Activated T-helper 1 cell treated with anti-CD3 and anti-CD28 coated beads, Interleukin-12 subunit alpha, Interleukin-12 subunit beta, Interleukin-2, Interleukin-4 antibody, amounts not matched to agents 30 ng/mL and 10 ng/mL and 1 ng/mL, durations not matched to agents 14 hours and 24 hours and 36 hours (primary cell): ENCODE measurements at regions of chr9 and their contacts with region 1.

Region 1: GRCh38 chr9:22147813-22148524 is 138.9 kb upstream of the CDKN2B start:
- DNase-seq: peak; percentile 15
- H3K4me3 Mint-ChIP-seq: no peak overlapping the region
- H3K27ac Mint-ChIP-seq: peak overlapping the region; percentile 75
- H3K4me1 Mint-ChIP-seq: peaks cover 32% of the 10 kb centered on the region
- H3K27me3 Mint-ChIP-seq: peaks cover 22% of the 10 kb centered on the region

Region 2: DNA sequence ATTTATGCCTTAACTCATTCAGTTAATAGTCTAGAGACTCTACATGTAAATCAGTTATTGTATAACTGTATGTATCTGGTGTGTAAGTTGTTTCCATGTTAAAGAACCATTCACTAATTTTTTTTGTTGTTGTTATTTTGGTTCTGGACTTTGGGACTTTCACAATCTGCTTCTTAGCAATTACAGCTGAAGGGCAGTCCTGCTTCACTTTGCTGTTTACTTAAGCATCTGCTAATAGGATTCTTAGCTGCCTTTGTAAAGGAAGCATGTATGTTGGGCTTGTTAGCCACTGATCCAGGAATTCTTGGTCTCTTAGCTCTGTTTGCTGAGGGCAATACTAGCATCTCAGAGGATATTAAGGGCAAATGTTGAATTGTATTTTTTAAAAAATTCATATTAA is 1366.9 kb before region 1 on chr9:
- intact Hi-C with region 1: no loop called
- DNase-seq: no peak
- H3K4me3 Mint-ChIP-seq: no peak overlapping the region
- H3K27ac Mint-ChIP-seq: no peak overlapping the region
- H3K4me1 Mint-ChIP-seq: no peaks in the 10 kb centered on the region
- H3K27me3 Mint-ChIP-seq: no peaks in the 10 kb centered on the region

Region 3: DNA sequence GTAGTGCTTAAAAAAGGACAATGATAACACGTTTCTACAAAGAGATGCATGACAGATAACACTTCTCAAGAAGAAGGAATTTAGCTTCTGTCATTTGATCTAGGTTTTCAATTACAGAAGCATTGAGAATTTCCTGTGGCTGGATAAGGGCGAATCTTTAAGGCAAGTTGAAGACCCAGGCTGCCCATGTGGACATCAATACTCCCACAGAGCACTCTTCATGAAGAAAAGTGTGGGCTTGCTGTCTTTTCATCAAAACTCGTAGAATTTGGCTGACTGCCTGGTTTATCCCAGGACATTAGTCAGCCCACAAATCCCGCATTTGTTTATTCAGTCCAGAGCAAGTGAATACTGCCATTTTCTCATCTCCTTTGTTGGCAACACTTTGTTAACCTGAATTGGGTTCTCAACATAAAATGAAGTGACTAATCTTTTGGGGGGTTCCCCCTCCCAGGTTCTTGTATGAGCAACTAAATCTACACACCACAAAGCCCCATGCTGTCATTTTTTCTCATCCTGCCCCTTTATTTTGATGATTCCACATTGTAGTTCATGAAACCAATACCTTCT is 95.5 kb before region 1 on chr9:
- intact Hi-C with region 1: loop called (anchors 1 kb)
- DNase-seq: peak; percentile 40
- H3K4me3 Mint-ChIP-seq: no peak overlapping the region
- H3K27ac Mint-ChIP-seq: peak overlapping the region; percentile 5
- H3K4me1 Mint-ChIP-seq: peaks cover 32% of the 10 kb centered on the region
- H3K27me3 Mint-ChIP-seq: peaks cover 26% of the 10 kb centered on the region

Region 4: DNA sequence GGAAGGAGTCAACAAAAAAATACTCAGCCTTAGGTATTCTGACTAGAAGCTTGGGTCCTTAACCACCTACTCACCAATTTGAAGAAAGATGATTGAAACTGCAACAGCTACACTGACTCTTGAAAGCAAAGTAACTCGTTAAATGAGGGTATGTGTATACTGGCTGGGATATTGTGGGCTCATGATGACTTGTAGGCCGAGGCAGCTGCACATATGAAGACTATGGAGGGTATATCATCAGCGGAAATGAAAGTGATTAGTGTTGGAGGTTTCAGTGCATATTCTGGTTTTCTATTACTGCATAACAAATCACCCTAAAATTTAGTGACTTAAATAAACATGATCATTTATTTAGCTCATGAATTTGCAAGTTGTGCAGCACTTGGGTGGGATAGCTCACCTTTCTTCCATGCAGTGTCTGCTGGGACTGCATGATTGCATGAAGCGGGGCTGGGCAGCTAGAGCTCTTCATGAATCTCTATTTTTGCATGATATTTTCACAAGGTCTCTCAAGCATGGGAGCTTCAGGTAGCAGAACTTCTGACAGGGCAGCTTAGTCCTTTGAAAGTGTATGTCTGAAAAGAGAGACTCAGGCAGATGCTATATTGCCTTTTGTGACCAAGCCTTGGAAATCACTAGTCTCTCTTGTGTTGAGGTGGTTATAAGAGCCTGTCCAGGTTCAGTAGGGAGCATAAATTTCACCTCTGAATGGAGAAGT is 42.8 kb before region 1 on chr9:
- intact Hi-C with region 1: loop called (anchors 2 kb)
- DNase-seq: no peak
- H3K4me3 Mint-ChIP-seq: no peak overlapping the region
- H3K27ac Mint-ChIP-seq: no peak overlapping the region
- H3K4me1 Mint-ChIP-seq: peaks cover 47% of the 10 kb centered on the region
- H3K27me3 Mint-ChIP-seq: peaks cover 27% of the 10 kb centered on the region

Region 5: GRCh38 chr9:22169727-22170503 is 21.9 kb after region 1 on chr9:
- intact Hi-C with region 1: loop called (anchors 2 kb)
- DNase-seq: no peak
- H3K4me3 Mint-ChIP-seq: no peak overlapping the region
- H3K27ac Mint-ChIP-seq: no peak overlapping the region
- H3K4me1 Mint-ChIP-seq: peaks cover 9% of the 10 kb centered on the region
- H3K27me3 Mint-ChIP-seq: peaks cover 23% of the 10 kb centered on the region

Region 6: DNA sequence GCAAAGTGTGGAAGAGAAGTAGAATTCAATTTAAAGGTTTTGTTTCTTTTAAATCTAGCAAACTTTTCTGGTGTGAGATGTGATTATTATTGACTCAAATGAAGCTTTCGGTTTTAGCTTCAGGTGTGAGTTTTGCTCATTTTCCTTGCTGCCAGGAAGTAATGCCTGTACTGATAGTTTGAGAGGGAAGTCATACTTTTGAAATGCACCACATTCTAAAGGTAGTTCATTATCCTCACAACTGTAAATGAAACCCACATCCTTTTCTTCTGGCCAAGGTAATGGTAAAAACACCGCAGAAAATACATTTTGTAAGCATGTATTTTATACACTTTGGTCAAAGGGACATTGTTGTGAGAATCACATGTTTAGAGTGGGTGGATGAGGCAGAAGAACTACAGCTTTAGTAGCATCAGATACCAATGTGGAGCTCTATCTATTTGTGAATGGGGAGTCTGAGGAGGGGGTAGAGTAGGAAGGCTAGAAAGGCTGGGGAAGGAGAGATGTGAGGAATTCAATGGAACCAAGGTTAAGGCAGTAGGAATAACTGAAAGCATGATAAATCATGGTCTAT is 28.1 kb after region 1 on chr9:
- intact Hi-C with region 1: loop called (anchors 1 kb)
- DNase-seq: peak; percentile 5
- H3K4me3 Mint-ChIP-seq: peak overlapping the region; percentile 1
- H3K27ac Mint-ChIP-seq: peak overlapping the region; percentile 51
- H3K4me1 Mint-ChIP-seq: peaks cover 30% of the 10 kb centered on the region
- H3K27me3 Mint-ChIP-seq: peaks cover 10% of the 10 kb centered on the region

Region 7: GRCh38 chr9:22211593-22212360 is 63.8 kb after region 1 on chr9:
- intact Hi-C with region 1: loop called (anchors 1 kb)
- DNase-seq: no peak
- H3K4me3 Mint-ChIP-seq: no peak overlapping the region
- H3K27ac Mint-ChIP-seq: no peak overlapping the region
- H3K4me1 Mint-ChIP-seq: peaks cover 38% of the 10 kb centered on the region
- H3K27me3 Mint-ChIP-seq: peaks cover 21% of the 10 kb centered on the region

Region 8: GRCh38 chr9:22238809-22239684 is 91.1 kb after region 1 on chr9:
- intact Hi-C with region 1: loop called (anchors 1 kb)
- DNase-seq: no peak
- H3K4me3 Mint-ChIP-seq: no peak overlapping the region
- H3K27ac Mint-ChIP-seq: no peak overlapping the region
- H3K4me1 Mint-ChIP-seq: peaks cover 50% of the 10 kb centered on the region
- H3K27me3 Mint-ChIP-seq: peaks cover 43% of the 10 kb centered on the region